IMR-90 (cell line): ENCODE measurements at regions of chr2 and their contacts with region 1.

Region 1: GRCh38 chr2:189534854-189535832 is 45.4 kb downstream of the SLC40A1 start:
- DNase-seq: peak; percentile 78
- ATAC-seq: peak; percentile 90
- H3K4me3 ChIP-seq: no peak overlapping the region
- H3K27ac ChIP-seq: peak overlapping the region; percentile 15; the same call in 1 of the 2 replicates
- H3K4me1 ChIP-seq: peaks cover 3% of the 10 kb centered on the region
- H3K27me3 ChIP-seq: no peaks in the 10 kb centered on the region
- CTCF ChIP-seq: no peak
- POLR2A ChIP-seq: no peak
- RAD21 ChIP-seq: no peak

Region 2: GRCh38 chr2:189487773-189488310 is 47.3 kb before region 1 on chr2:
- CTCF ChIA-PET with region 1: interaction called, 3 read pairs
- POLR2A ChIA-PET with region 1: interaction called, 12 read pairs
- dilution Hi-C with region 1: no loop called
- in situ Hi-C with region 1: no loop called
- intact Hi-C with region 1: no loop called
- DNase-seq: no peak
- ATAC-seq: no peak
- H3K4me3 ChIP-seq: no peak overlapping the region
- H3K27ac ChIP-seq: no peak overlapping the region
- H3K4me1 ChIP-seq: peaks cover 2% of the 10 kb centered on the region; the same call in 1 of the 2 replicates
- H3K27me3 ChIP-seq: no peaks in the 10 kb centered on the region
- CTCF ChIP-seq: no peak
- POLR2A ChIP-seq: no peak
- RAD21 ChIP-seq: no peak

Region 3: GRCh38 chr2:189601043-189601442 is 65.9 kb after region 1 on chr2:
- CTCF ChIA-PET with region 1: no interaction called
- POLR2A ChIA-PET with region 1: no interaction called
- dilution Hi-C with region 1: no loop called
- in situ Hi-C with region 1: no loop called
- intact Hi-C with region 1: no loop called
- DNase-seq: peak; percentile 54
- ATAC-seq: no peak
- H3K4me3 ChIP-seq: no peak overlapping the region
- H3K27ac ChIP-seq: no peak overlapping the region
- H3K4me1 ChIP-seq: peaks cover 2% of the 10 kb centered on the region
- H3K27me3 ChIP-seq: no peaks in the 10 kb centered on the region
- CTCF ChIP-seq: no peak
- POLR2A ChIP-seq: no peak
- RAD21 ChIP-seq: no peak